MCF 10A (cell line): ENCODE measurements at regions of chr7 and their contacts with region 1.

Region 1: GRCh38 chr7:111012799-111013675 is 77.9 kb upstream of the LRRN3 start:
- DNase-seq: peak; percentile 78
- H3K4me3 Mint-ChIP-seq: peak overlapping the region; percentile 24
- H3K27ac Mint-ChIP-seq: peak overlapping the region; percentile 68
- H3K4me1 Mint-ChIP-seq: peaks cover 24% of the 10 kb centered on the region
- H3K27me3 Mint-ChIP-seq: no peaks in the 10 kb centered on the region
- CTCF ChIP-seq: no peak

Region 2: GRCh38 chr7:110432061-110432553 is 580.9 kb before region 1 on chr7:
- CTCF ChIA-PET with region 1: no interaction called
- POLR2A ChIA-PET with region 1: no interaction called
- intact Hi-C with region 1: no loop called
- DNase-seq: no peak
- H3K4me3 Mint-ChIP-seq: no peak overlapping the region
- H3K27ac Mint-ChIP-seq: no peak overlapping the region
- H3K4me1 Mint-ChIP-seq: no peaks in the 10 kb centered on the region
- H3K27me3 Mint-ChIP-seq: no peaks in the 10 kb centered on the region
- CTCF ChIP-seq: no peak

Region 3: DNA sequence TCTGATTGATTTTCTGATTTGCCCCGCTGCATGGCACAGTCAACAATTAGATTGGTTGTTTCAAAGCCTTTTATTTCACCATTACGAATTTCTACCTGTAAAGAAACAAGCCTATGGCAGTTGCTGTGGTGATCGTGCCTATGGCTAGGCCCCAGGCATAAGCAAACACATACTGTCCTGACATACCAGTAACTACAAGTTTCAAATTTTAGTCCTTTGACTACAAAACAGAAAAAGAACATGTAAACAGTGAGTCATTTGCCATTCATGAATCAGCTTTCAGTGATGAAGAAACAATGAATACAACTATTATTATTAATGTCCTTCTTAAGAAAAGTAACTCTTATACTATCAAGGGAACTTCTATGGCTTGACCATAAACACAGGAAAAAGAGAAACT is 90.1 kb before region 1 on chr7:
- CTCF ChIA-PET with region 1: interaction called, 4 read pairs
- POLR2A ChIA-PET with region 1: interaction called, 5 read pairs
- intact Hi-C with region 1: loop called (anchors 1 kb)
- DNase-seq: peak; percentile 77
- H3K4me3 Mint-ChIP-seq: peak overlapping the region; percentile 20
- H3K27ac Mint-ChIP-seq: peak overlapping the region; percentile 99
- H3K4me1 Mint-ChIP-seq: peaks cover 29% of the 10 kb centered on the region
- H3K27me3 Mint-ChIP-seq: no peaks in the 10 kb centered on the region
- CTCF ChIP-seq: no peak

Region 4: GRCh38 chr7:111074071-111074747 is 61.2 kb after region 1 on chr7:
- CTCF ChIA-PET with region 1: no interaction called
- POLR2A ChIA-PET with region 1: no interaction called
- intact Hi-C with region 1: loop called (anchors 5 kb)
- DNase-seq: no peak
- H3K4me3 Mint-ChIP-seq: no peak overlapping the region
- H3K27ac Mint-ChIP-seq: no peak overlapping the region
- H3K4me1 Mint-ChIP-seq: peaks cover 28% of the 10 kb centered on the region
- H3K27me3 Mint-ChIP-seq: no peaks in the 10 kb centered on the region
- CTCF ChIP-seq: no peak